Activated naive CD4-positive, alpha-beta T cell treated with anti-CD3 and anti-CD28 coated beads, Interleukin-2, amount 10 ng/mL, durations not matched to agents 7 days and 5 days (primary cell): ENCODE measurements at regions of chr10 and their contacts with region 1.

Region 1: DNA sequence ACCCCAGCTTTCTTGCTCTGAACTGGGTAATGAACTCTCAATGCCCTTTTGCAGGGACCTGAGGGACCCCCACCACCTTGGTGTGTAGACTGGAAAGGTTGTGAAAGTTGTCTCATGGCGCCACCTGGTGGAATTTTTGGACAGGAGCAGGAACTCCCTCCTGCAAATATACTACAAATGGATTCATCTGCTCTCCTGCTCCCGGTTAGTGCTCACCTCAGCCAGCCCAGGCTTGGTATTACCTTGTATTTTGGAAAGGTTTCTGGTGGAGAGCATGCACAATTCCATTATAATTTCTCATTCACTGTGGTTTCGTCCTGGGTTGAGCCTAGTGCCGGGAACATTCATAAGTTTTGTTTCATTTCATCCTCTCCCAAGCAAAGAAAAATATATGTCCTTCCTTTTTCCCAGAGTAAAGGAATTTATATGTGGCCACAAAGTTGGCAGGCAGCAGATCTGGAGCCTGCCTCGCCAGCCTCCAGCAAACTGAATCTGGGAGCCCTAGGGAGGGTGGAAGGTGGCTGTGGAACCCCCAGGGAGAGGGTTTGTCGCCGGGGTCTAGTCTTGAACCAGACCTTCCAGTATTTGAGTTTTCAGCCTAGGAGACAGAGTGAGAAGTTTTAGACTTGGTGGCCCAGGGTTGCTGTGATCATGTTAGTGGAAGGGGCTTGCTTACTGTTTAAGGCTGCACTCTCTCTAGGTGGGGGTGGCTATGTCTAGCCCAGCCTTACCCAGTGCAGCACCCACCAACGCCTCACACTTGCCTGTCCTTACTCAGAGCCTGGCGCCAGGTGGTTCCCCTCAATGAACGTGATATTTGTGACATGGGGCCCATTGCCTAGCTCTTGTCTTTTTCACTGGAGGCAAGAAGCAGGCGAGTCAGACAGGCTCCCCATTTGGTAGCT is 9.5 kb downstream of the FAM241B start:
- DNase-seq: peak; percentile 82
- H3K4me3 Mint-ChIP-seq: no peak overlapping the region
- H3K27ac Mint-ChIP-seq: no peak overlapping the region
- H3K4me1 Mint-ChIP-seq: no peaks in the 10 kb centered on the region
- H3K27me3 Mint-ChIP-seq: peaks cover 19% of the 10 kb centered on the region

Region 2: DNA sequence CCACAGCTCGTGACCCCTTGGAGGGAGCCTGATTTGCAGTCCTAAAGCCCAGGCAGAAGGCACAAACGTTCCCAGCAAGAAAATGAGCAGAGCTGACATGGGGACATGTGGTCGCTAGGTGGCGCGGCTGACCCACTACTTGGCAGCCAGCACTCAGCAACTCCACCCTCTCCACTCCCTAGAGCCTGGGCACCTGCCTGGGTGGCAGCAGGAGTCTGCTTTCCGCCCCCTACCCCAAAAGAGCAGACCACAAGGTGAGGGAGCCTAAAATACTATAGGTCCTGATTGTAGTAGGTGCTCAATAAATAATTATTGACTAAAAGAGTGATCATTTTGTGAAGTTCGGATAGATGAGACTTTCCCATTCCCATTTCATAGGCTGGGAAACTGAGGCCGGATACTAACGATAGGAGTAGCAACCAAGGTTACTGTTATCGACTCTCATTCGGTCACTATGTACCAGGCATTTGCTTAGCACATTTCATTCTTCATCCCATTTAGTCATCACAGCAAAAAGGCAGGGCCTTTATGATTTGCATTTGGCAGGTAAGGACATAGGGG is 123.8 kb before region 1 on chr10:
- CTCF ChIA-PET with region 1: interaction called, 302 read pairs
- DNase-seq: peak; percentile 87
- H3K4me3 Mint-ChIP-seq: no peak overlapping the region
- H3K27ac Mint-ChIP-seq: peak overlapping the region; percentile 50
- H3K4me1 Mint-ChIP-seq: no peaks in the 10 kb centered on the region
- H3K27me3 Mint-ChIP-seq: peaks cover 44% of the 10 kb centered on the region

Region 3: GRCh38 chr10:69558559-69558958 is 81.0 kb before region 1 on chr10:
- CTCF ChIA-PET with region 1: no interaction called
- DNase-seq: peak; percentile 53
- H3K4me3 Mint-ChIP-seq: no peak overlapping the region
- H3K27ac Mint-ChIP-seq: peak overlapping the region; percentile 56
- H3K4me1 Mint-ChIP-seq: peaks cover 11% of the 10 kb centered on the region
- H3K27me3 Mint-ChIP-seq: peaks cover 53% of the 10 kb centered on the region

Region 4: GRCh38 chr10:69573056-69573806 is 66.3 kb before region 1 on chr10 and contains the start of gene NEUROG3:
- CTCF ChIA-PET with region 1: interaction called, 14 read pairs
- DNase-seq: no peak
- H3K4me3 Mint-ChIP-seq: peak within 1 kb of the TSS; percentile 64
- H3K27ac Mint-ChIP-seq: no peak within 1 kb of the TSS
- H3K4me1 Mint-ChIP-seq: peaks cover 24% of the 10 kb centered on the region
- H3K27me3 Mint-ChIP-seq: peaks cover 100% of the 10 kb centered on the region

Region 5: GRCh38 chr10:69716711-69717560 is 77.4 kb after region 1 on chr10:
- CTCF ChIA-PET with region 1: interaction called, 122 read pairs
- DNase-seq: peak; percentile 79
- H3K4me3 Mint-ChIP-seq: no peak overlapping the region
- H3K27ac Mint-ChIP-seq: no peak overlapping the region
- H3K4me1 Mint-ChIP-seq: no peaks in the 10 kb centered on the region
- H3K27me3 Mint-ChIP-seq: peaks cover 21% of the 10 kb centered on the region

Region 6: GRCh38 chr10:69800109-69800508 is 160.6 kb after region 1 on chr10:
- CTCF ChIA-PET with region 1: interaction called, 11 read pairs
- DNase-seq: no peak
- H3K4me3 Mint-ChIP-seq: no peak overlapping the region
- H3K27ac Mint-ChIP-seq: no peak overlapping the region
- H3K4me1 Mint-ChIP-seq: peaks cover 14% of the 10 kb centered on the region
- H3K27me3 Mint-ChIP-seq: peaks cover 83% of the 10 kb centered on the region